Endothelial cell of umbilical vein (primary cell): ENCODE measurements at regions of chr4 and their contacts with region 1.

Region 1: DNA sequence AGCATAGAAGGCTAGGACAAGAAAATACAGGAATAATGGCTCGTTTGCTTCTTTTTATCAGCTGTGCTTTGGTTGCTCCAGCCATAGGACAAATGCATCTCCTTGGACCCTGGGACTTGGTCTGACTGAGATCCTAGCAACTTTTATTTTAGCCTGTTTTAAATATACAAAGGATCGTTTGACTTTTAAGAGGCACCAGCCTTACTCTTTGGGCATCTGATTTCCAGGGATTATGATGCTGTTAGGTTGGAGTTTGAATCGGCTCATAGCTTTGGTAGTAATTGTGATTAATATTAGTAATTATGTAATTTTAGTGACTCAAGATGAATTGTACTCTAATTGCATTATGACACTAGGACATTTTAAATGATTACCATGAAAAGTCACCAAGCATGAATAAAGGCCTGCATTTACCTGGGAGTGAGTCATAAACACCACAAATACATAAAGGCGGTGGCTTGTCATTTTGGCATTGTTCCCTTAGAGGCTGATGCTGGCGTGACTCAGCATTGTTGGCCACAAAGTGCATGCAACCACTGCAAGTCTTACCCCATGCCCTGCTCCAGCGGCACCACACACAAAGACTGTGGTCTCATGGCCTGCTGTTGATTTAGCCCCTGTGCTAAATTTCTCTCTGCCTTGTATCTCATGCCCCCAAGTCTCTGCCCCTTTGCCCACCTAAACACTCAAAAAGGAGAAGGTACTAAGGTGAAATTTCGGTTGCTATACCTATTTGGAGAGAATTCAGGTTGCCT is 12.4 kb downstream of the GPAT3 start:
- DNase-seq: peak; percentile 88
- H3K4me3 ChIP-seq: no peak overlapping the region
- H3K27ac ChIP-seq: peak overlapping the region; percentile 39
- H3K4me1 ChIP-seq: peaks cover 21% of the 10 kb centered on the region
- H3K27me3 ChIP-seq: no peaks in the 10 kb centered on the region
- CTCF ChIP-seq: no peak
- POLR2A ChIP-seq: no peak

Region 2: DNA sequence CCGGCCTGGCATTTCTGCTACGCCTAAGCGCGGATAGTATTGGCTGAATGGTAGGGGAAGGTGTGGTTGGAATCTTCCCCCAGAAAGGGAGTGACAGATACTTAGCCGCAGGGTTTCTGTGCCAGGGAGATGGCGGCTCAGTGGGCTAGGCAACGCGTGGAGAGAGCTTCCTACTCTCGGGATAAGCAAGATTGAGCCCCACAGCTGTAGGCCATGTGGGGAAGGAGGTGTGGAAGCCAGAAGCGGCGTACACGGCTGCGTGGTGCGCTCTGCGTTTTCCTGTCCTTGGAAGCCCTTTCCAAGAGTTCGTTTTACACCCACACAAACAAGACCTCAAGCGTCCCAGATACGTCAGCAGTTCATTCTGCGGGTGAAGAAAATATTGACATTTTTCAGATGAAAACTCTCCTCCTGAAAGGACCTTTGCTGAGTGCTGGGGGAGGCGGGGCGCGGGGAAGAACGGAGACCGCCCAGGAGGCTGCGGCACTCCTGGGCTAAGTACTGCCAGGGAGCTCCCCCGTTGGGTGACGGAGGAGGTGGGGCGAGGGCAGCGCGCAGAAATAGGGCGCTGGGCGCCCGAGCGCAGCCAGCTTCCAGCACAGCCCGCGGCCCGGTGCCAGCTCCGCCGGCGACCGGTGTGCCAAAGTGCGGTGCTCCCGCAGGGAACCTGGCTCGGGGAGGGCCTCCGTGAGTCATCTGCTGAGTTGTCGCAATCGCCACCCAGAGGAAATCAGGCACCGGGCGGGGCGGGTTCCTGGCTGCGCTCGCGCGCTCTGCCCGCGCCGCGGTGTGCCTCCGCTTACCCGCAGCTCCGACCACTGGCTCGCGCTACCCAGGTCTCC is 12.6 kb before region 1 on chr4 and contains the start of gene GPAT3:
- CTCF ChIA-PET with region 1: interaction called, 4 read pairs
- POLR2A ChIA-PET with region 1: no interaction called
- dilution Hi-C with region 1: no loop called
- intact Hi-C with region 1: loop called (anchors 1 kb)
- DNase-seq: peak; percentile 53
- H3K4me3 ChIP-seq: peak within 1 kb of the TSS; percentile 46 to 76 (median 54)
- H3K27ac ChIP-seq: no peak within 1 kb of the TSS
- H3K4me1 ChIP-seq: peaks cover 13% of the 10 kb centered on the region
- H3K27me3 ChIP-seq: peaks cover 19 to 23% of the 10 kb centered on the region in 2 experiments
- CTCF ChIP-seq: no peak
- POLR2A ChIP-seq: no peak
- total RNA-seq, gene GPAT3: 2.1 and 3.1 TPM in 2 replicates